ENCODE measurements at regions of chr12 and their contacts with region 1.

Region 1: GRCh38 chr12:1594261-1595025 is at the start of gene FBXL14:
- DNase-seq: peak; percentile 86 to 95 (median 91)
- H3K4me3 ChIP-seq: peak within 1 kb of the TSS; percentile 95
- H3K4me3 Mint-ChIP-seq: peak within 1 kb of the TSS; percentile 92 to 98 (median 95)
- H3K27ac ChIP-seq: peak within 1 kb of the TSS; percentile 84
- H3K27ac Mint-ChIP-seq: peak within 1 kb of the TSS; percentile 90 to 98 (median 95)
- H3K4me1 ChIP-seq: peaks cover 32% of the 10 kb centered on the region
- H3K4me1 Mint-ChIP-seq: peaks cover 50 to 52% (median 51%) of the 10 kb centered on the region in 3 donors
- H3K27me3 ChIP-seq: no peaks in the 10 kb centered on the region
- H3K27me3 Mint-ChIP-seq: peaks cover 0 to 4% of the 10 kb centered on the region in 2 donors
- total RNA-seq, gene FBXL14: 20.5 to 22.1 TPM

Region 2: GRCh38 chr12:1583421-1584078 is 10.9 kb before region 1 on chr12:
- CTCF ChIA-PET with region 1: interaction called, 28 read pairs
- POLR2A ChIA-PET with region 1: interaction called, 10 read pairs
- DNase-seq: peak; percentile 33 to 78 (median 63)
- H3K4me3 ChIP-seq: no peak overlapping the region
- H3K4me3 Mint-ChIP-seq: peak overlapping the region in 4 of 7 donors; percentile 25 to 57 (median 34)
- H3K27ac ChIP-seq: no peak overlapping the region
- H3K27ac Mint-ChIP-seq: peak overlapping the region in 7 of 8 donors; percentile 8 to 80 (median 31)
- H3K4me1 ChIP-seq: peaks cover 19% of the 10 kb centered on the region
- H3K4me1 Mint-ChIP-seq: peaks cover 17 to 21% (median 18%) of the 10 kb centered on the region in 3 donors
- H3K27me3 ChIP-seq: no peaks in the 10 kb centered on the region
- H3K27me3 Mint-ChIP-seq: no peaks in the 10 kb centered on the region

Measured in CD8-positive, alpha-beta memory T cell (primary cell).